GM12878 (cell line): ENCODE measurements at regions of chr4 and their contacts with region 1.

Region 1: DNA sequence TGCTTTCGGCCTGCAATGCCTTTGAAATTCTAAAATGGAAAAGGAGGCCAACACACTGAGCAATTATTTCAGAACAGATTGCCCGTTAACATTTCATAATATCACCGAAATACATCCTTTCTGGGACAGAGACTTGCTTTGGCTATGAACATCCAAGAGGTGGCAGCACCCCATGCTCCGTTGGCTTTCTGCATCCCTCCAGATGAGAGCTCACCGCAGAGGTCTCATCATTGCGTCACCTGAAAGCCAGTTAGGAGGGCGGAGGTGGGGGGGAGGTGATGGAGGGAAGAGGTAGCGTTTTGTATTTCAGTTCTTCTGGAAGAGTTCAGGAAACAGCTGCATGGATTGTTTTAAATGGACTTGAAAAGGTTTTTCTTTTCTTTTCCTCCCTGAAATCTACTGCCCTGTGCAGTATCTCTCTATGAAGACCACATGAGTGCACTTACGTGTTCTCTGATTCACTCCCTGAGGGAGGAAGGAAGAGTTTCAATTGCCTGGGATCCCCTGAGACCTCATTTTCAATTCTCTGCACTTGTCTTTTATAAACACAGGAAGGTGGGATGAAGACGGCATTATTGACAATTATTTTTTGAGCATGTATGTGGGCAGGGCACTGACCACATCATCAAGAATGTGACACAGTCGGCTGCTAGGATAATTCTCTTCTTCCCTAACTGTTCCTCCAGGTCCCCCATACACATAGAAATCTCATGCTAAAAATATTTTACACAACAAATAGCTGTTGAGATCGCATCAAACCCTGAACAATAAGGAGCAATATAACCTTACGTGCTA is 166.9 kb upstream of the PGRMC2 start:
- DNase-seq: peak; percentile 51
- ATAC-seq: peak; percentile 95
- H3K4me3 ChIP-seq: no peak overlapping the region
- H3K27ac ChIP-seq: no peak overlapping the region
- H3K4me1 ChIP-seq: 0 out of 2 replicates have a peak, but pooled peaks cover 3% of the 10 kb centered on the region
- H3K27me3 ChIP-seq: no peaks in the 10 kb centered on the region
- CTCF ChIP-seq: peak; percentile 84 to 90 (median 86)
- EP300 ChIP-seq: no peak
- POLR2A ChIP-seq: no peak
- RAD21 ChIP-seq: peak; percentile 93

Region 2: DNA sequence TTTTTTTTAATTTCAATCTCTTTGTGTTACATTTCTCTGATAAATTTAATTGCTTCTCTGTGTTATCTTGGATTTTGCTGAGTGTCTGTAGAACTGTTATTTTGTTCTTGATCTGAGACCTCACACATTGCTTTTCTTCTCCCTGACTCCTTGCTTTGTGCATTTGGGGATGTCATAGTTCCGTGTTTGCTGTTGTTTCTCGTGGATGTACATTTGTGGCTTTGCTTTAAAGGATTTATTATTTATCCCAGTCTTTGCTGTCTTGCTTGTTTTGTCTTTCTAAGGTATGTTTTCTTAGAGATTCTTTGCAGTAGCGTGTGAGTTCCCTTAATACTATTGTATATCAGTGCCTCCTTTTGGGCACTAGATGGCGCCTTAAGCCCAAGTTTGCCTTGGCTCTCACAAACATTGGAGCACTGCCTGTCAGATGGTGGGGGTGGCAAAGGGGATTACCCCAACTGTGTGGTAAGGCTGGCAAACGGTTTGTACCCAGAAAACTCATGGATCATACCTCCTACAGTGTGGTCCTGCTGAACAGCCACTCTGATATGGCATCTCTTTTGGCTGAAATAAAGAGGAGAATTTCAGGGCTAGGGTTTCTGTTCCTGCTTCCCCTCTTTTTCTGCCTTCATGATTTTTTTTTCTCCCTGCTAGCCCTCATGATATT is 263.2 kb before region 1 on chr4:
- CTCF ChIA-PET with region 1: interaction called, 6 read pairs
- POLR2A ChIA-PET with region 1: interaction called, 5 read pairs
- RAD21 ChIA-PET with region 1: interaction called, 4 read pairs
- SMC1A ChIA-PET with region 1: interaction called, 12 read pairs
- in situ Hi-C with region 1: no loop called
- intact Hi-C with region 1: loop called (anchors 5 kb)
- DNase-seq: peak; percentile 54
- ATAC-seq: peak; percentile 100
- H3K4me3 ChIP-seq: no peak overlapping the region
- H3K27ac ChIP-seq: no peak overlapping the region
- H3K4me1 ChIP-seq: peaks cover 2% of the 10 kb centered on the region; the same call in 1 of the 2 replicates
- H3K27me3 ChIP-seq: no peaks in the 10 kb centered on the region
- CTCF ChIP-seq: peak; percentile 79 to 97 (median 91); a peak in 5 of 6 replicates
- EP300 ChIP-seq: no peak
- POLR2A ChIP-seq: no peak
- RAD21 ChIP-seq: peak; percentile 94

Region 3: GRCh38 chr4:128371001-128371777 is 83.3 kb before region 1 on chr4:
- CTCF ChIA-PET with region 1: no interaction called
- POLR2A ChIA-PET with region 1: no interaction called
- RAD21 ChIA-PET with region 1: no interaction called
- SMC1A ChIA-PET with region 1: no interaction called
- in situ Hi-C with region 1: no loop called
- intact Hi-C with region 1: no loop called
- DNase-seq: no peak
- ATAC-seq: no peak
- H3K4me3 ChIP-seq: no peak overlapping the region
- H3K27ac ChIP-seq: no peak overlapping the region
- H3K4me1 ChIP-seq: no peaks in the 10 kb centered on the region
- H3K27me3 ChIP-seq: no peaks in the 10 kb centered on the region
- CTCF ChIP-seq: no peak
- EP300 ChIP-seq: no peak
- POLR2A ChIP-seq: no peak
- RAD21 ChIP-seq: no peak

Region 4: DNA sequence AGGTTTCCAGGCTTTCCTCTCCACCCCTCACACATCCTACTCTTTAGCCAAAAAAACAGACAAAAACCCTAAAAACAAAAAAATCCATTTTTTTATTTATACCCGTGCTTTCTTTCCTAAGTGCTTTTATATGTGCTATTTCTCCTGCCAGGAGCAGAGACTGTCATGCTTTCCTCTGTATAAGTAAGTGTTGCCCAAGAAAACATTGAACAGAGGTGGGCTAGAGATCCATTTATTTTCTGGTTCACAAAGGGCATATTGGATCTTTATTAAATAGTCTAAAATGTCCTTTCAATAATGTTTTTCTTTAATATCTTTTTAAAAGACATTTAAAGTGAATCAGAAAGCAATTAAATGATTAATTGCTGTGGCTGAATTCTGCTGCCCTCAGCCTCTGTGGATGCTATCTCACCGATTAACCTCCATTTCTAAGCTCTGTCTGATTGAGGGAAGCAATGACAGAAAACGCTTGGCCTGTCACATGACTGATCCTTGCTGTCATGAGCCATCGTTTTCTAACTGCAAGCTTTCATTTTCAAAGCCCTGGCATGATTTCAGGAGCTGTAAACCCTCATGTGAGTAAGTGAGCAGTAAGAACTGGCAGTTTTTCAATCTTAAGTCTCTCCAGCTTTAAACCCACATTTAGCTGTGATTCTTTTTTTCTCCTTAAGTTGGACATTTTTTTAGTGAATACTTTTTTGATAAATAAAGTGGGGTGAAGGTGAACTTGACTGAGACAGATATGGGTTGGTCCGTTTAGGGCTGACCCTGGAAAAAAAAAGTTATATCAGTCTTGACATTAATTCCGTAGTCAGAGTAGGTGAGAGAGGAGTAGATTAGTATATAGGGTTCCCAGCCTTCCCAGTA is 13.9 kb after region 1 on chr4:
- CTCF ChIA-PET with region 1: interaction called, 36 read pairs
- POLR2A ChIA-PET with region 1: interaction called, 4 read pairs
- RAD21 ChIA-PET with region 1: interaction called, 7 read pairs
- SMC1A ChIA-PET with region 1: interaction called, 22 read pairs
- in situ Hi-C with region 1: no loop called
- intact Hi-C with region 1: no loop called
- DNase-seq: no peak
- ATAC-seq: no peak
- H3K4me3 ChIP-seq: no peak overlapping the region
- H3K27ac ChIP-seq: no peak overlapping the region
- H3K4me1 ChIP-seq: no peaks in the 10 kb centered on the region
- H3K27me3 ChIP-seq: no peaks in the 10 kb centered on the region
- CTCF ChIP-seq: no peak
- EP300 ChIP-seq: no peak
- POLR2A ChIP-seq: no peak
- RAD21 ChIP-seq: no peak

Region 5: GRCh38 chr4:128528793-128529553 is 74.5 kb after region 1 on chr4:
- CTCF ChIA-PET with region 1: interaction called, 15 read pairs
- POLR2A ChIA-PET with region 1: no interaction called
- RAD21 ChIA-PET with region 1: no interaction called
- SMC1A ChIA-PET with region 1: interaction called, 10 read pairs
- in situ Hi-C with region 1: no loop called
- intact Hi-C with region 1: no loop called
- DNase-seq: no peak
- ATAC-seq: no peak
- H3K4me3 ChIP-seq: no peak overlapping the region
- H3K27ac ChIP-seq: no peak overlapping the region
- H3K4me1 ChIP-seq: no peaks in the 10 kb centered on the region
- H3K27me3 ChIP-seq: no peaks in the 10 kb centered on the region
- CTCF ChIP-seq: no peak
- EP300 ChIP-seq: no peak
- POLR2A ChIP-seq: no peak
- RAD21 ChIP-seq: no peak

Region 6: GRCh38 chr4:128558896-128559679 is 104.6 kb after region 1 on chr4:
- CTCF ChIA-PET with region 1: interaction called, 43 read pairs
- POLR2A ChIA-PET with region 1: interaction called, 3 read pairs
- RAD21 ChIA-PET with region 1: interaction called, 12 read pairs
- SMC1A ChIA-PET with region 1: interaction called, 34 read pairs
- in situ Hi-C with region 1: no loop called
- intact Hi-C with region 1: no loop called
- DNase-seq: no peak
- ATAC-seq: no peak; the same call in 2 of the 3 replicates
- H3K4me3 ChIP-seq: no peak overlapping the region
- H3K27ac ChIP-seq: no peak overlapping the region
- H3K4me1 ChIP-seq: no peaks in the 10 kb centered on the region
- H3K27me3 ChIP-seq: no peaks in the 10 kb centered on the region
- CTCF ChIP-seq: no peak
- EP300 ChIP-seq: no peak
- POLR2A ChIP-seq: no peak
- RAD21 ChIP-seq: no peak

Region 7: GRCh38 chr4:128574706-128575105 is 120.2 kb after region 1 on chr4:
- CTCF ChIA-PET with region 1: interaction called, 87 read pairs
- POLR2A ChIA-PET with region 1: interaction called, 3 read pairs
- RAD21 ChIA-PET with region 1: interaction called, 45 read pairs
- SMC1A ChIA-PET with region 1: interaction called, 68 read pairs
- in situ Hi-C with region 1: no loop called
- intact Hi-C with region 1: loop called (anchors 5 kb)
- DNase-seq: peak; percentile 25
- ATAC-seq: peak; percentile 99
- H3K4me3 ChIP-seq: no peak overlapping the region
- H3K27ac ChIP-seq: no peak overlapping the region
- H3K4me1 ChIP-seq: no peaks in the 10 kb centered on the region
- H3K27me3 ChIP-seq: no peaks in the 10 kb centered on the region
- CTCF ChIP-seq: peak; percentile 66 to 69 (median 68)
- EP300 ChIP-seq: no peak
- POLR2A ChIP-seq: no peak
- RAD21 ChIP-seq: peak; percentile 79

Region 8: GRCh38 chr4:128863312-128864075 is 409.0 kb after region 1 on chr4:
- CTCF ChIA-PET with region 1: interaction called, 13 read pairs
- POLR2A ChIA-PET with region 1: no interaction called
- RAD21 ChIA-PET with region 1: interaction called, 5 read pairs
- SMC1A ChIA-PET with region 1: interaction called, 6 read pairs
- in situ Hi-C with region 1: loop called (anchors 5 kb)
- intact Hi-C with region 1: loop called (anchors 1 kb)
- DNase-seq: no peak
- ATAC-seq: peak; percentile 73
- H3K4me3 ChIP-seq: no peak overlapping the region; the same call in 1 of the 2 replicates
- H3K27ac ChIP-seq: peak overlapping the region; percentile 84
- H3K4me1 ChIP-seq: peaks cover 36% of the 10 kb centered on the region
- H3K27me3 ChIP-seq: no peaks in the 10 kb centered on the region
- CTCF ChIP-seq: peak; percentile 73 to 83 (median 81)
- EP300 ChIP-seq: no peak
- POLR2A ChIP-seq: no peak
- RAD21 ChIP-seq: peak; percentile 75